Heart left ventricle (tissue), 16 donors: ENCODE measurements at regions of chr12 and their contacts with region 1.

Region 1: DNA sequence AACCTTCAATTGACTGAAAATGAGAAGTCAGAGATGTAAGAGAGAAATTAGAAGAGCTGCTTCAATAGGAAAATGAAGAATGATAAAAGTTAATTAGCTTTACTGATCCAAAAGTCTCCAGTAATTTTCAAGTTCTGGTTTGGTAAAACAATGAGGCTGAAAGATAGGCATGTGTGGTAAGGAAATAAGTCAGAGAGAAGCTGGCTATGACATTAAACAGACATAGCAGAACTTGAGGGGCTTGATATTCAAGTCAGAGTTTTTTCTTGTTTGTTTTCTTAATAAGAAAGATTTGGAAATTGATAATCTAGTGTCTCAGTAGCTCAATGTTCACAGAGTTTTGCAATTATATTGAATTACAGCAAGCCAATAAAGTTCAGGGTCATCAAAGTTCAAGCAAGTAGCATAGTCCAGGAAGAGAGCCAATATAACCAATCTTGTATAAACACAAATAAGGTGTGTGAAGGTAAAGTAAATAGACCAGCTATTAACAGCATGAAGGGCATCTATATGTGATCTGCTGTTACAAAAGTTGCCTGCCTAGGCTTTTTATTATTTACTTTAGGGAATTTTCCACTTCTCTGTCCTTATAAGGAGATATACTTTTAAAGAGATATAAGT is 1111.5 kb downstream of the TRHDE start:
- DNase-seq: no peak
- ATAC-seq: no peak
- H3K4me3 ChIP-seq: no peak overlapping the region
- H3K27ac ChIP-seq: no peak overlapping the region
- H3K4me1 ChIP-seq: no peaks in the 10 kb centered on the region
- H3K27me3 ChIP-seq: no peaks in the 10 kb centered on the region
- CTCF ChIP-seq: no peak
- POLR2A ChIP-seq: no peak

Region 2: GRCh38 chr12:72547573-72547972 is 836.1 kb before region 1 on chr12:
- intact Hi-C with region 1: no loop called
- DNase-seq: no peak
- ATAC-seq: no peak
- H3K4me3 ChIP-seq: no peak overlapping the region
- H3K27ac ChIP-seq: no peak overlapping the region
- H3K4me1 ChIP-seq: no peaks in the 10 kb centered on the region
- H3K27me3 ChIP-seq: no peaks in the 10 kb centered on the region
- CTCF ChIP-seq: no peak
- POLR2A ChIP-seq: no peak

Region 3: GRCh38 chr12:73330584-73331351 is 52.9 kb before region 1 on chr12:
- intact Hi-C with region 1: loop called in 1 of 10 experiments (anchors 10 kb)
- DNase-seq: no peak
- ATAC-seq: no peak
- H3K4me3 ChIP-seq: no peak overlapping the region
- H3K27ac ChIP-seq: no peak overlapping the region
- H3K4me1 ChIP-seq: no peaks in the 10 kb centered on the region
- H3K27me3 ChIP-seq: no peaks in the 10 kb centered on the region
- CTCF ChIP-seq: no peak
- POLR2A ChIP-seq: no peak

Region 4: DNA sequence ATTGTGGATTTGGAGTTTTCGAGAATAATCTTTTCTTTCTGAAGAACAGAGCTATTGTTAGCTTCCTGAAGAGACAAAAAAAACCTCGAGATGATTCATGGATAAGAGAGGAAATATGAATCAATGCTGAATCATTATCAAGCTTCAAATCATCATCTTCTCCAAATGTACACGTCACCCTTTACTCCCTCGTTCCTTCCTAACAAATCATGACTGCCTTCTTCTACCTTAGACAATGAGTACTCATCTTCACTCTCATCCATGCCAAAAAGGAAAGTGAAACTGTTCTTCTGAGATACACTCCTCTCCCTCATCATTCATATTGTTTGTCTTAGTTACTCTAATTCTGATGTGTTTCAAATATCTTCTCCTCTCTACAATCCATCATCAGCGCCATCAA is 38.1 kb after region 1 on chr12:
- intact Hi-C with region 1: no loop called
- DNase-seq: no peak
- ATAC-seq: no peak
- H3K4me3 ChIP-seq: no peak overlapping the region
- H3K27ac ChIP-seq: no peak overlapping the region
- H3K4me1 ChIP-seq: no peaks in the 10 kb centered on the region
- H3K27me3 ChIP-seq: no peaks in the 10 kb centered on the region
- CTCF ChIP-seq: no peak
- POLR2A ChIP-seq: no peak

Region 5: DNA sequence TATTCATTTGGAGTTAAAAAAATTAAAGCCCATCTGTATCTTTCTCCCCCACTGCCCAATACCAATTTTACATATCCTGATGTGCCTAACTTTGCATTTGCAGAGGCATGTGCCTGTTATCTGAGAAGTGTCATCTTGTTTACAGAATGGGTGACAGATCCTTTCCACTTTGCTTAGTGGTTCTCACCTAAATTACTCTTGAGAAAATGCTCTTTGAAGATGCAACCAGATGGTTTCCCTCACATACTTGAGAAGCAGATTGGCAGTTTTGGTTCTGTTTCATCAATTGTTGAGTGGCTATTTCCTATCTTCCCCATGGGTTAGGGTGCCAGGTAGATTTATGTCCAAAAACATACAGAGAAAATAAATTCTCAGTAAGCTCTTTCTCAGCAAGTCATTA is 102.6 kb after region 1 on chr12:
- intact Hi-C with region 1: no loop called
- DNase-seq: no peak
- ATAC-seq: no peak
- H3K4me3 ChIP-seq: no peak overlapping the region
- H3K27ac ChIP-seq: no peak overlapping the region
- H3K4me1 ChIP-seq: no peaks in the 10 kb centered on the region
- H3K27me3 ChIP-seq: no peaks in the 10 kb centered on the region
- CTCF ChIP-seq: no peak
- POLR2A ChIP-seq: no peak

Region 6: DNA sequence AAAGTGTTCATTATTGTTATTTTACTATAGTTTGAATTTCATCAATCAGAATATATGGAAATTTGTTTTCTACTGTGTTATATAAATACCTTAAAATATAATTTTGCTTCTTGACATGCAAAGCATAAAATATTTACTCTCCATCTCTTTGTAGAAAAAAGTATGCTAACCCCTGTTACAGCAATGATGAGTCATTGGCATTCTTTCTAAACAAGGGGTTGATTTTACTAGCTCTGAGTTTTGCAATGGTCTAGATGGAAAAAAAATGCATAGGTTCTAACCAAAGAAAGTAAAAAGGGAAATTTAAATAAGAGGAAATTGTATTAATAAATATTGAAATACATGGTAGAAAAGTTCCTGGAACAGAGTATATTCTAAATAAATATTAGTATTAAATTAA is 163.7 kb after region 1 on chr12:
- intact Hi-C with region 1: no loop called
- DNase-seq: no peak
- ATAC-seq: no peak
- H3K4me3 ChIP-seq: no peak overlapping the region
- H3K27ac ChIP-seq: no peak overlapping the region
- H3K4me1 ChIP-seq: no peaks in the 10 kb centered on the region
- H3K27me3 ChIP-seq: no peaks in the 10 kb centered on the region
- CTCF ChIP-seq: no peak
- POLR2A ChIP-seq: no peak